ENCODE measurements at regions of chr14 and their contacts with region 1.

Region 1: GRCh38 chr14:44180975-44181374 is 326.1 kb downstream of the FSCB start:
- DNase-seq: no peak
- H3K4me3 ChIP-seq: no peak overlapping the region
- H3K27ac ChIP-seq: no peak overlapping the region
- H3K4me1 ChIP-seq: no peaks in the 10 kb centered on the region
- H3K27me3 ChIP-seq: no peaks in the 10 kb centered on the region
- CTCF ChIP-seq: no peak

Region 2: DNA sequence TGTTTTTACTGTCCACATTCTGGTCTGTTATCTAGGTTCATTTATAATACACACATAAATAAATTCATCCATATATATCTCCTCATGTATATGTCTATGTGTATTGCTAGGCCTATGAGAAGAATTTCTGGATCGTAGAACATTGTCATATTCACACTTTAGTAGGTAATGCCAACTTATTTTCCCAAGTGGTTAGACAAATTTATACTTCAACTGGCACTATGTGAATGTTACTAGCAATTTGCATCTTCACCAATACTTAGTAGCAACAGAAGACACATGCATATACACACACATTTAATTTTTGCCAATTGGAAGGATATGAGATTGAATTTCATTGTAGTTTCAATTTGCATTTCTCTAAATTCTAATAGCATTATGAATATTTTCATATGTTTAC is 39.0 kb before region 1 on chr14:
- CTCF ChIA-PET with region 1: no interaction called
- POLR2A ChIA-PET with region 1: no interaction called
- intact Hi-C with region 1: no loop called
- DNase-seq: no peak
- H3K4me3 ChIP-seq: no peak overlapping the region
- H3K27ac ChIP-seq: no peak overlapping the region
- H3K4me1 ChIP-seq: no peaks in the 10 kb centered on the region
- H3K27me3 ChIP-seq: no peaks in the 10 kb centered on the region
- CTCF ChIP-seq: no peak

Region 3: DNA sequence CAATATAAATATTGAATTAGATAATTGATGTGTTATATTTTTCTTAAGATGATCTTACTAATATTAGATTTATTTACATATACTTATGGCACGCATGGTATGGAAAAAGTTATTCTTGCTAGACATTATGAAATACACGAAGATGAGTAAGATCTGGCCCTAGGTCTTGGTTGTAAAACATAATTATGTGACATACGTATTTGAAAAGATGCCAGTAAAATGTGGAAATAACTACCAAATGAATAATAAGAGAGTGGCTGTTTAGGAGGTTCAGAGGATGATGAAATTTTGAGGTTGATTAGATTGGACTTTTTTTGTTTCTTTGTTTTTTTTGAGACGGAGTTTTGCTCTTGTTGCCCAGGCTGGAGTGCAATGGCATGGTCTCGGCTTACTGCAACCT is 996.1 kb after region 1 on chr14:
- CTCF ChIA-PET with region 1: no interaction called
- POLR2A ChIA-PET with region 1: interaction called, 13 read pairs
- intact Hi-C with region 1: no loop called
- DNase-seq: no peak
- H3K4me3 ChIP-seq: no peak overlapping the region
- H3K27ac ChIP-seq: no peak overlapping the region
- H3K4me1 ChIP-seq: no peaks in the 10 kb centered on the region
- H3K27me3 ChIP-seq: no peaks in the 10 kb centered on the region
- CTCF ChIP-seq: no peak

Measured in PC-9 (cell line).